ENCODE measurements at regions of chr17 and their contacts with region 1.

Region 1: GRCh38 chr17:37570527-37571093 is 38.6 kb downstream of the SYNRG start:
- DNase-seq: peak; percentile 60 to 75
- H3K4me3 ChIP-seq: no peak overlapping the region
- H3K27ac ChIP-seq: no peak overlapping the region
- H3K4me1 ChIP-seq: no peaks in the 10 kb centered on the region
- H3K27me3 ChIP-seq: no peaks in the 10 kb centered on the region
- CTCF ChIP-seq: peak; percentile 79 to 90 (median 83)
- EP300 ChIP-seq: no peak
- POLR2A ChIP-seq: no peak
- RAD21 ChIP-seq: peak; percentile 87 to 91

Region 2: DNA sequence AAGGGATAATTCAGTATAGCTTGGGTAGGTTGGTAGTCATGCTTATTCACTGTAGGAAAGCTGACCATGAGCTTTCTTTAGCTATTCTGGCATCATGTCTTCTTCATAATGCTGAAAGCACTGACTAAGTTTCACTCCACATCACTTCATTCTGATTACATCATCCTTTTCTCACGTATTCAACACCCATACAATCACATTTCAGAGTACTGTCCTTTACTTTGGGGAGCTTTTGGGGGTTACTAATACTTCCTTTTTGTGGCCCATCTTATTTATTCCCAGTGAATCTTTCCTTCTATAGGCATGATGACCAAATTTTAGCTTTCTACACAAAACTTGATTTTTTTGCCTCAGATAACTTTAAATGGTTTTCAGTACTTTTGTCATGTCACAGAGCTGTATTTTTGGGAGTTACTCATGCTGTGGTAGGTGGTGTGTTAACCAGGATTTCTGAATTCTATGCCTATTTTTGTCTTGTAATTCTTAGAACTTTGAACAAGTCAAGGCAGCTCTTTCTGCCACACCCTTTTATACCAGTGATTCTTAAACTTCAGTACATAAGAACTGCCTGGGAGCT is 140.5 kb before region 1 on chr17:
- CTCF ChIA-PET with region 1: no interaction called
- POLR2A ChIA-PET with region 1: no interaction called
- DNase-seq: no peak
- H3K4me3 ChIP-seq: no peak overlapping the region
- H3K27ac ChIP-seq: no peak overlapping the region
- H3K4me1 ChIP-seq: no peaks in the 10 kb centered on the region
- H3K27me3 ChIP-seq: no peaks in the 10 kb centered on the region
- CTCF ChIP-seq: no peak
- EP300 ChIP-seq: no peak
- POLR2A ChIP-seq: no peak
- RAD21 ChIP-seq: no peak

Region 3: GRCh38 chr17:37521821-37522220 is 48.8 kb before region 1 on chr17:
- CTCF ChIA-PET with region 1: interaction called, 71 read pairs
- POLR2A ChIA-PET with region 1: no interaction called
- DNase-seq: no peak
- H3K4me3 ChIP-seq: no peak overlapping the region
- H3K27ac ChIP-seq: no peak overlapping the region
- H3K4me1 ChIP-seq: no peaks in the 10 kb centered on the region
- H3K27me3 ChIP-seq: no peaks in the 10 kb centered on the region
- CTCF ChIP-seq: no peak
- EP300 ChIP-seq: no peak
- POLR2A ChIP-seq: no peak
- RAD21 ChIP-seq: no peak

Region 4: GRCh38 chr17:37527249-37527851 is 43.3 kb before region 1 on chr17:
- CTCF ChIA-PET with region 1: interaction called, 71 read pairs
- POLR2A ChIA-PET with region 1: no interaction called
- DNase-seq: peak in 1 of 2 experiments; percentile 40
- H3K4me3 ChIP-seq: no peak overlapping the region
- H3K27ac ChIP-seq: no peak overlapping the region
- H3K4me1 ChIP-seq: no peaks in the 10 kb centered on the region
- H3K27me3 ChIP-seq: no peaks in the 10 kb centered on the region
- CTCF ChIP-seq: peak in 2 of 3 experiments; percentile 79 to 83; a peak in 3 of 4 replicates
- EP300 ChIP-seq: no peak
- POLR2A ChIP-seq: no peak
- RAD21 ChIP-seq: peak; percentile 86 to 88

Region 5: GRCh38 chr17:37541880-37542660 is 28.5 kb before region 1 on chr17:
- CTCF ChIA-PET with region 1: interaction called, 19 read pairs
- POLR2A ChIA-PET with region 1: interaction called, 3 read pairs
- DNase-seq: no peak
- H3K4me3 ChIP-seq: no peak overlapping the region
- H3K27ac ChIP-seq: no peak overlapping the region
- H3K4me1 ChIP-seq: peaks cover 0 to 9% (median 2%) of the 10 kb centered on the region in 4 experiments; a peak in 3 of 7 replicates
- H3K27me3 ChIP-seq: no peaks in the 10 kb centered on the region
- CTCF ChIP-seq: no peak
- EP300 ChIP-seq: no peak
- POLR2A ChIP-seq: no peak
- RAD21 ChIP-seq: no peak

Region 6: DNA sequence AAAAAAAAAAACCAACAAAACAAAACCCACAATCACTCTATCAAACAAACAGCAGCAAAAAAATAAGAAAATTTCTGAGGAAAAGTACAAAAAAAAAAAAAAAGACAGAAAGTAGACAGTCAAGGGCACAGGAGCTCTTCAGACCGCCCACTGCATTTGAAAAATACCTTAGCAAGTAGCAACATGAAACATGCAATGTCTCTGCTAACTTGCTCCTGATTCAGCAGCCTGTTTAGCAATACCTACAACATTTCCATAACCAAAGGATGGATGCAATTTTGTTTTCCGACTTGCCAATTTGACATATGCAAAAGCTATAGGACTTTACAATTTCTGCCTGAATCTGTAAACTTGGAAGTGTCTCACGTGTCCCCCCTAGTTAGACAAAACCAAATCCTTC is 18.8 kb before region 1 on chr17:
- CTCF ChIA-PET with region 1: interaction called, 13 read pairs
- POLR2A ChIA-PET with region 1: no interaction called
- DNase-seq: no peak
- H3K4me3 ChIP-seq: no peak overlapping the region
- H3K27ac ChIP-seq: no peak overlapping the region
- H3K4me1 ChIP-seq: no peaks in the 10 kb centered on the region
- H3K27me3 ChIP-seq: peaks cover 0 to 1% (median 0%) of the 10 kb centered on the region in 4 experiments; a peak in 1 of 7 replicates
- CTCF ChIP-seq: no peak
- EP300 ChIP-seq: no peak
- POLR2A ChIP-seq: no peak
- RAD21 ChIP-seq: no peak

Region 7: DNA sequence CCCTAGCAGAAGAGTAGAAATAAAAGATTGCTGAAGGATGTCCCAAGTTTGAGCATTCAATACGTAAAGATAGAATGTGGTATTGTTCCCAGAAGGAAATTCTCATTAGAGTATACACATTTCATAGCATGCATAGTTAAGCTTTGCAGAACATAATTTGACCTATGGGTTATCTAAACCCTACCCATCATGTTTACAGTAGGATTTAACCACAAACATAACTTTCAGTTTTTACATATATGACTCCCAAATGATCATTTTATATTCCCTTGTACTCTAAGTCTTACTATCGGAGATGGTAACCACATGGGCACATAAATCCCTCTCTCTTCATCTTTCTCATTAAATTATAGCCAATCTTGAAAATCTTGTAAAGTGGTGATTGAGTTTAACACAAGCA is 12.3 kb before region 1 on chr17:
- CTCF ChIA-PET with region 1: interaction called, 18 read pairs
- POLR2A ChIA-PET with region 1: interaction called, 4 read pairs
- DNase-seq: no peak
- H3K4me3 ChIP-seq: no peak overlapping the region
- H3K27ac ChIP-seq: no peak overlapping the region
- H3K4me1 ChIP-seq: peaks cover 0 to 8% (median 4%) of the 10 kb centered on the region in 4 experiments; a peak in 3 of 7 replicates
- H3K27me3 ChIP-seq: no peaks in the 10 kb centered on the region
- CTCF ChIP-seq: no peak
- EP300 ChIP-seq: no peak
- POLR2A ChIP-seq: no peak
- RAD21 ChIP-seq: no peak

Region 8: GRCh38 chr17:37643118-37643766 is 72.6 kb after region 1 on chr17 and contains the start of gene DDX52:
- CTCF ChIA-PET with region 1: no interaction called
- POLR2A ChIA-PET with region 1: no interaction called
- DNase-seq: peak; percentile 46 to 85
- H3K4me3 ChIP-seq: peak within 1 kb of the TSS; percentile 78 to 92 (median 83)
- H3K27ac ChIP-seq: peak within 1 kb of the TSS; percentile 87
- H3K4me1 ChIP-seq: peaks cover 0 to 3% (median under 1%) of the 10 kb centered on the region in 4 experiments; a peak in 1 of 7 replicates
- H3K27me3 ChIP-seq: peaks cover 0 to 2% (median 0%) of the 10 kb centered on the region in 4 experiments; a peak in 3 of 7 replicates
- CTCF ChIP-seq: no peak
- EP300 ChIP-seq: no peak
- POLR2A ChIP-seq: peak; percentile 75 to 92
- RAD21 ChIP-seq: no peak
- total RNA-seq, gene DDX52: 45.9 and 47.4 TPM in 2 replicates

Measured in H1 (cell line).